Endothelial cell of umbilical vein (primary cell): ENCODE measurements at regions of chr11 and their contacts with region 1.

Region 1: DNA sequence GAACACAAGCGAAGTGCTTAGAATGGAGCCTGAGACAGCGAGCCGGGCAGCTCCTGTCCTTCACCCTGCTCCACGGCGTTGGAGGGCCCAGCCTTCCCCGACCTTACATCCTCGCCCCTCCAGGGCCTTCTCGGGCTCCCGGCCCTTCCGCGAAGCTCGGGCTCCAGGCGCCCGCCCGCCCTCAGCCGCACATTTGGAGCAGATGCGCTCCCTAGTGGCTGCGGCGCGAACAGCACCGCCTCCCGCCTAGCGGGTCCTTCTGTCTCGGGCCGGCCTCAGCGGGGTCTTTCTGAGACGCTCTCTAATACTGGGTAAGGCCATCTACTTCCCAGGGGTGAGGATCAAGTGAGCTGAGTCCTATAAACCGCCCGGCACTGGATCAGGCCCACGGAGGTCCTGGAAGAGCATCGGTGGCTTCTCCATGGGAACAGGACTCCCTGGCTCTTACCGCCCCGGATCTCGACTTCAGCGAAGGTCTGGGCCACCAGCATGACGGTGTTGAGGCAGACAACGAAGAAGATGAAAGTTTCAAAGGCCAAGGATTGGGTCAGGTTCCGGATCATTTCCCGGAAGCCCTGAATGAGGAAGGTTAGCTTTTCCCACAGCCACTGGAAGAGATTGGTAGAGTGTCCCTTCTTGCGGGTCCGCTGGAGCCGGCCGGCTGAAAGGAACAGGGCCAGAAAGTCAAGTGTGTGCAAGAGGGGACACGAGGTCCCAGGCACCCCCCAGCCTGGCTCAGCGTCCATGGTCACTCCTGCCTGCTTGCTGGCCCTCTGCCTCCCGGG is 3.7 kb downstream of the CATSPER1 start:
- DNase-seq: peak; percentile 67
- H3K4me3 ChIP-seq: no peak overlapping the region
- H3K27ac ChIP-seq: no peak overlapping the region
- H3K4me1 ChIP-seq: peaks cover 17% of the 10 kb centered on the region
- H3K27me3 ChIP-seq: no peaks in the 10 kb centered on the region
- CTCF ChIP-seq: peak; percentile 97 to 98
- POLR2A ChIP-seq: no peak

Region 2: DNA sequence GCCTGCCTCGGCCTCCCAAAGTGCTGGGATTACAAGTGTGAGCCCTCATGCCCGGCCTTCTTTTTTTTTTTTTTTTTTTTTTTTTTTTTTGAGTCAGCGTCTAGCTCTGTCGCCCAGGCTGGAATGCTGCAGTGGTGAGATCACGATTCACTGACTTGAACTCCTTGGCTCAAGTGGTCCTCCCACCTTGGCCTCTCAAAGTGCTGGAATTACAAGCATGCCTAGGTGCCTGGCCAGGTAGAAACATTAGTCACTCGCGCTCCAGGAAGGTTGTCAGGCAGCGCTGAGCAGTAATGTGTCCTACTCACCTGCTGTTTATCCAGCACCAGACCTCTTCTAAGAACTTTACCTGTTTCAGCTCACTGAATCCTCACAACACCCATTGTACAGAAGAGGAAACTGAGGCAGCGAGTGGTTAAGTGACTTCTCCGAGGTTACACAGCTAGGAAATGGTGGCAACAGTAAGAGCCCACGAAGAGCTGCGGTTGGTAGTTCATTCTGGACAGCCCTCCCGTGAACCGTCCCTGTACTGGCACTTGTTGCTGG is 11.3 kb before region 1 on chr11:
- CTCF ChIA-PET with region 1: interaction called, 37 read pairs
- POLR2A ChIA-PET with region 1: interaction called, 4 read pairs
- dilution Hi-C with region 1: no loop called
- intact Hi-C with region 1: no loop called
- DNase-seq: no peak
- H3K4me3 ChIP-seq: no peak overlapping the region
- H3K27ac ChIP-seq: no peak overlapping the region
- H3K4me1 ChIP-seq: peaks cover 20% of the 10 kb centered on the region
- H3K27me3 ChIP-seq: peaks cover 2% of the 10 kb centered on the region in 2 experiments
- CTCF ChIP-seq: no peak
- POLR2A ChIP-seq: no peak

Region 3: GRCh38 chr11:66035653-66036333 is 13.2 kb after region 1 on chr11:
- CTCF ChIA-PET with region 1: interaction called, 10 read pairs
- POLR2A ChIA-PET with region 1: no interaction called
- dilution Hi-C with region 1: no loop called
- intact Hi-C with region 1: no loop called
- DNase-seq: no peak
- H3K4me3 ChIP-seq: no peak overlapping the region
- H3K27ac ChIP-seq: no peak overlapping the region
- H3K4me1 ChIP-seq: no peaks in the 10 kb centered on the region
- H3K27me3 ChIP-seq: peaks cover 0 to 10% of the 10 kb centered on the region in 2 experiments
- CTCF ChIP-seq: no peak
- POLR2A ChIP-seq: no peak

Region 4: GRCh38 chr11:66045177-66045639 is 22.6 kb after region 1 on chr11:
- CTCF ChIA-PET with region 1: interaction called, 31 read pairs
- POLR2A ChIA-PET with region 1: no interaction called
- dilution Hi-C with region 1: no loop called
- intact Hi-C with region 1: loop called (anchors 1 kb)
- DNase-seq: peak; percentile 69
- H3K4me3 ChIP-seq: no peak overlapping the region
- H3K27ac ChIP-seq: no peak overlapping the region
- H3K4me1 ChIP-seq: no peaks in the 10 kb centered on the region
- H3K27me3 ChIP-seq: peaks cover 2 to 3% of the 10 kb centered on the region in 2 experiments
- CTCF ChIP-seq: peak; percentile 91 to 98
- POLR2A ChIP-seq: no peak